ENCODE measurements at regions of chr1 and their contacts with region 1.

Region 1: GRCh38 chr1:109516872-109517271 is 7.3 kb upstream of the AMIGO1 start:
- DNase-seq: no peak
- H3K4me3 Mint-ChIP-seq: no peak overlapping the region
- H3K27ac Mint-ChIP-seq: no peak overlapping the region
- H3K4me1 Mint-ChIP-seq: peaks cover 8% of the 10 kb centered on the region
- H3K27me3 Mint-ChIP-seq: peaks cover 23% of the 10 kb centered on the region

Region 2: DNA sequence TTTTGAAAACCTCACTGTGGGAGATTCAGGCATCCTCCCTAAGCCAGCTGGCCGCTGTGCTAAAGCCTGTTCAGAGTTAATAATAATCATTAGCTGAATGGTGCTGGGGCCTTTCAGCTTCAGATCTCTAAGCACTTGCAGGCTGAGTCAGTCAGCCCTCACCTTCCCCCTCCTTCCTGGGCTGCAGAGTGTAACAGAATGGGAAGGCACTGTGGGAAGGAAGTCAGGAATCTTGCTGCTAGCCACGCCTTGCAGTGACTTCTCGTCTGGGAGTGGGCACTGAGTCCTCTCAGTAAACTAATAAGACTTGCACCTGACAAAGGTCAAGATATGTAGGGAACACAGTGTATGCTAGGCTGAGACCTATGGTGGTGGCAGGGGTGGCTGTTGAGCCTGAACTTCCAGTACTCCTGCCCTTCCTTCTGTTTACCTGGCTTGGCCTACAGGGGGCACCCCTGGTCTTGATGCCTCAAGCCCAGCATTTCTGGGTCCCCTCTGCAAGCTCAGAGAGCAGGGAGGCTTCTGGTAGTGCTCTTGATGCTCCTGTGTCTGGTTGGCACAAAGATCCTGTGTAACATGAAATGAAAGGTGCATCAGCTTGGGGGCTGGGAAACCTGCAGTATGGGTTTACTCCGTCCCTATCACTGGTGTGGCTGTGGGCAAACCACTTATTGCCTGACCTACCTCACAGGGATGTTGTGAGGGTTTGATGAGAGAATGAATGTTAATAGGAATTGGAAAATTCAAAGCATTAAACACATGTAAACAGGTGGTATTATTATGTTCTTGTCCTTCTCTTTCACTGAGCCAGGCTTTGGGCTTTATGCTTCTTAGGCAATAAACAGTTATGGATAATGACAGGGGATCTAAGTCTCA is 17.0 kb before region 1 on chr1:
- CTCF ChIA-PET with region 1: interaction called, 1,080 read pairs
- DNase-seq: peak; percentile 80
- H3K4me3 Mint-ChIP-seq: no peak overlapping the region
- H3K27ac Mint-ChIP-seq: peak overlapping the region; percentile 95
- H3K4me1 Mint-ChIP-seq: peaks cover 94% of the 10 kb centered on the region
- H3K27me3 Mint-ChIP-seq: no peaks in the 10 kb centered on the region